PC-9 (cell line): ENCODE measurements at regions of chr4 and their contacts with region 1.

Region 1: DNA sequence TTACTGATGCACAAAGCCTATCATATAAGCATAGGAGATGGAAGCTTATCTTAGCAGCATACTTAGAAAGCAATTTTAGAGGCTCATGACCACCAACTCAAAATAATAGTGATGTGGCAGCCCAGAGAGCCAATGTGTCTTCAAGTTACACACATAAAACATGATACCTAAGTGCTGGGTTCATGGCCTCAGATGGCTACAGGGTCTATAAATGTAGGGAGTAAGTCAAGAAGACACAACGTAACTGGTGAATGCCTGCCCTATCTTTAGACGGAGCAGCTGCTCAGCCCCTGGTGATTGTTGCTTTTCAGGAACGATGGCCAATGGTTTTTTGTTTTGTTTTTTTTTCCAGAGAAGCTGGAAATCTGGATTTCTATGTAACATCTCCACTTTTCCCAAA is 42.8 kb downstream of the RNF150 start:
- DNase-seq: no peak
- H3K4me3 ChIP-seq: no peak overlapping the region
- H3K27ac ChIP-seq: no peak overlapping the region
- H3K4me1 ChIP-seq: no peaks in the 10 kb centered on the region
- H3K27me3 ChIP-seq: no peaks in the 10 kb centered on the region
- CTCF ChIP-seq: no peak

Region 2: DNA sequence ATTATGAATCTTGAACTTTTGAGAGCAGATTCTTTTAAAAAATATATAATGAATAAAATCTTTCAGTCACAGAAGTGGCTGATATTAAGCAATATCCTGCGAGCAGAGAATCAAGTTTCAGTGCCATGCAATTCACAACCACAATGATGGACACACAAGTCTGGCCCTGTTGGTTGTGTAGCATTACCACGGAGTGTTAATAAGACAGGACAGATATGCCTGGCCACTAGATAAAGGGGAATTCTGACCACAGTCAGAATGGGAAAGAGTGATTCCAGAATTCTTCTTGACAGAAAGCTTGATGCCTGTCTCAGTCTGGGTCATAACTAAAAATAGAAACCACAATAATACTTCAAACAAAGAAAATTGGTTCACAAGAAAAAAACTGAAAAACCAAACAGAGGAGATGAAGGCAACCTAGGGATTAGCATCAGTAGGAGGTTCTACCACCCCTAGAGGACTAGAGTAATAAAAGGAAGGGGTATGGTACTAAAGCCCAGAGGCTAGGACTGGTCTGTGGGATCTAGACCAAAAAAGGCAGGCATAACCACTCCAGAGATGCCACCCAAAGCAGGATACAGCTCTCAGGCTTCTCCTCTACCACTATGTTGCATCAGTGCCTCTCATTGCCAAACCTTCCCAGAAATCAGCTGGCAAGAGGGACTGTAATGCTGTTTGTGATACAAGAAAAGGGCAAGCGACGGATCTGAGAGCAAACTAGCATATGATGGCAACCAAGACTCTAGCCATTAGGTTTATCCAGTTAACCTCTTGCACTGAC is 16.2 kb before region 1 on chr4:
- CTCF ChIA-PET with region 1: no interaction called
- POLR2A ChIA-PET with region 1: no interaction called
- intact Hi-C with region 1: no loop called
- DNase-seq: no peak
- H3K4me3 ChIP-seq: no peak overlapping the region
- H3K27ac ChIP-seq: no peak overlapping the region
- H3K4me1 ChIP-seq: no peaks in the 10 kb centered on the region
- H3K27me3 ChIP-seq: no peaks in the 10 kb centered on the region
- CTCF ChIP-seq: no peak

Region 3: GRCh38 chr4:142081025-142081424 is 990.6 kb after region 1 on chr4:
- CTCF ChIA-PET with region 1: no interaction called
- POLR2A ChIA-PET with region 1: interaction called, 15 read pairs
- intact Hi-C with region 1: no loop called
- DNase-seq: no peak
- H3K4me3 ChIP-seq: no peak overlapping the region
- H3K27ac ChIP-seq: no peak overlapping the region
- H3K4me1 ChIP-seq: no peaks in the 10 kb centered on the region
- H3K27me3 ChIP-seq: no peaks in the 10 kb centered on the region
- CTCF ChIP-seq: no peak